GM10248 (cell line): ENCODE measurements at regions of chr16 and their contacts with region 1.

Region 1: GRCh38 chr16:84970447-84971127 is 40.7 kb downstream of the ZDHHC7 start:
- DNase-seq: peak; percentile 85
- CTCF ChIP-seq: peak; percentile 90

Region 2: GRCh38 chr16:84277237-84277823 is 693.3 kb before region 1 on chr16:
- CTCF ChIA-PET with region 1: interaction called, 11 read pairs
- POLR2A ChIA-PET with region 1: no interaction called
- DNase-seq: peak; percentile 72
- CTCF ChIP-seq: peak; percentile 90

Region 3: DNA sequence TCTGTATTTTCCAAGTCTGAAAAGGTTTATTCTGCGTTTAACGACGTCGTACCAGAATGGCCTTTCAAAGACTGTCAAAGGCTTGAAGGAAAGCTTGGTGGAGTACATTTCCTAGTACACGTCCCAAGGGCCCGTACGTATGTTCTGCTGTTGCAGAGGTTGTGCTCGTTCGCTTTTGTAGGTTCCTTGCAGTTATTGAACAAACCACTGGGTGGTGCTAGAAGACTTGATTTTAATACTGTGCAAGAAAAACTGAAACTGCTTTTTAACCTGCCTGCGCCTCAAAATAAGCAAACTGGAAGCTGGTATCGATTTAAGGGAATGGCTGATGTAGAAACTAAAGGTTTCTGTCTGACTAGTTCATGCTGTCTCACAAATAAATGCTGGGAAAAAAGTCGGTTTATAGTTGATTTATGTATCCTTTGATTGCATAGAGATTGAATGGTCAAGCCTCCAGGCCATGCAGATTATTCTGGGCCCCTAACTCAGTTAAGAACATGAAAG is 216.2 kb before region 1 on chr16:
- CTCF ChIA-PET with region 1: interaction called, 121 read pairs
- POLR2A ChIA-PET with region 1: no interaction called
- DNase-seq: peak; percentile 74
- CTCF ChIP-seq: peak; percentile 63

Region 4: DNA sequence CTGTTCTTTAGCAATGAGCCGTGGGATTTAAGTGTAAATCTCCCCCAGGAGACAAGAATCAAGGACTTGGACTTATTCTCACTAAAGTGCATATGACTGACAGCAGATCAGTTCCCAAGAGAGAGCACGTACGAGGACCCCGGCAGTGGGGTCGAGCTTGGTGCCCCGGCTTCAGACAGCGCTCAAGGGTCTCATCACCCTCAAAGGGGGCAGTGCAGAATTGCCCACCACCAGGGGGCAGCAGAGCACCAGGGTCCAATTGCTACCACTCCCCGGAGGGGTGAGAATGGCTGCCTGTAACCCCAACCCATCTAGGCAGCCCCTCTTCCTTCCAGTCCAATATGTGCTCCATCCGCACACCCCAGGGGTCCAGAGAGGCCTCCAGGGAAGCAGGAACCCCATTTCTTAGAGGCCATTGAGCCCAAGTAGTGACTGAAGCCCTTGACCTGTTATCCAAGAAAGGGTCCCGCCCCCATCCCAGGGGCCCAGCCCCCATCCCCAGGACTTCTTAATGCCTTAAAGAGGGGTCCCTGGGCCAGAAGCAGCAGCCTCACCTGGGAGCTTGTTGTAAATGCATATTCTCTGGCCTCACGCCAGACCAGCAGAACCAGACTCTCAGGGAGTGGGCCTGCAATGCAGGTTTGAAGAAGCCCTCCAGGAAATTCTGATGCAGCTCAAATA is 45.4 kb before region 1 on chr16:
- CTCF ChIA-PET with region 1: interaction called, 89 read pairs
- POLR2A ChIA-PET with region 1: no interaction called
- DNase-seq: peak; percentile 77
- CTCF ChIP-seq: peak; percentile 82

Region 5: DNA sequence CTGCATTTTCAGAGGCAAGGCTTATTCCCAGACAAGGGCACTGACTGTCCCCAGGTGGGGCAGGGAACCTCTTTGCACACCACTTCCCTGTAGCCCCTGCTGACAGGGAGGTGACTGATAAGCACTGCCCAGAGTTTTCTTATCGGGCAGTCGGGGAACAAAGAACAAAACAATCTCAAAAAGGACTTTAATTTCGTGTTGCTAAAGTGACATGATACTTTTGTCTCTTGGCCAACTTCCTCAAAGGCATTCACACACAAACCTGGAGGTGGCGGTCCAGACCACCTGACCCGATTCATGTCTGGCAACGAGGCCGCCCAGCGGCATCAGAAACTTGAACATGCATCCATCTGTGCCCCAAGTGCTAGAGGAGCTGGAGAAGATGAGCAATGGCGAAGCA is 11.8 kb after region 1 on chr16:
- CTCF ChIA-PET with region 1: interaction called, 14 read pairs
- POLR2A ChIA-PET with region 1: interaction called, 5 read pairs
- DNase-seq: no peak
- CTCF ChIP-seq: no peak

Region 6: DNA sequence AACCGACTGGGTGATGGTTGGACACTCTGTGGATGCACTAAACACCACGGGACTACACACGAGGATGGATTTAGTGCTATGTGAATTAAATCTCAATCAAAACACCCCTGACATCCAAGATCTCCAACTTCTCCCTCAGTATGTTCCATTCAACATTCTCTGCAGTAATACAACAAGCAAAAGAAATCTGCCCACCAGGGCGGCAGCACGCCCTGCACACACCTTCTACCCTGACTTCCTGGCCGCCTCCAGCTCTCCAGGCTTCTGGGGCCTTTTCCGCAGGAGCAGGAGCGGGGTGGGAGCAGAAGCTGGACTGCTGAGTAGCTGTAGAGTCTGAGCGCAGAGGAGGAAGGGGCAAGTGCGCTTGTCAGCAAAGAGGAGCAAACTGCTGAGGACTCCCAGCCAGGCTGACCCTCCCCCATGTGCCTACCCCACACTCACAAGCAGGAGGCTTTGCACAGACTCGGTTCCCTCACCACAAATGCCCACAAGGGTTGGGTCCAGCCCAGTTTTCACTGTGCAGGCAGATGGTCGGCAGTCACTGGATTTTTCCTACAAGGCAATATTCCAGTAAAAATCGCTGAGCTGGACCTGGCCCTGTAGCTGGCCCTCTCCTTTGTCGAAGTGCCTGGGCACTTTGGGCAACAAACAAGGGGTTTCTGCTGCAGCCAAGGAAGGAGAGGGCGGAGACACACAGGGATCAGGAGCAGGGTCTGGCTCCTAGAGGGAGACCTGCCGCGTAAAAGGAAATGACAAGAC is 17.9 kb after region 1 on chr16:
- CTCF ChIA-PET with region 1: interaction called, 16 read pairs
- POLR2A ChIA-PET with region 1: no interaction called
- DNase-seq: no peak
- CTCF ChIP-seq: no peak

Region 7: DNA sequence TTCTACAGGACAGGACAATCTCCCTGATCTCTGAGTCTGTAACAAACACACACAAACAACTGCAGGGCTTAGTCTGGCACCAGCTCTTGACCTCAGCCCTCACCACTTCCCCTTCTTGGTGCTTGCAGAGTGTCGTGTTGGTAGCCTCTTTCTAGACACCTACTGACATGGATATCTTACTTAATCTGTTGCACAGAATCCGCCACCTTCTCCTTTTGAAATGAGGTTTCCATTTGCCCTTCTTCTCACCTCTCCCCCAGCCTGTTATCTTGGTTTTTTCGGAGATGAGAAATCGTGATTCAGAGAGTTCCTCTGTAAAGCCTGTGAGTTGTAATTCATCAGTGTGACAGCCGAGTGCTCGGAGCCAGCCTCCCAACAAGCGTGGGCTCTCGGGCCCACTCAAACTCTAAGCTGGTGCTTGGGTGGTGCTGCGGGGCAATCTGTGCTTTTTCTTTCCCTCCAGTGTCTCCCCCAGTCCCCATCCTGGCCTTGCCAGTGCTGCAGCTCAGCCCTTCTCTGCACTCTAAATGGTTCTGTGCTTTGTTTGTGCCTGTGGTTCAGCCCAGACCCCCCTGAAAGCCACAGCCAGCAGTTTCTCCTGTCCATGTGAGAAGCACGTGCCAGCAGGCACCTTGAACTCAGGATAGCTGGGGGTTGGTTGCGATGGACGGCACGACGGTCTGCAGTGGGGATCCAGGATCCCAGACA is 85.1 kb after region 1 on chr16:
- CTCF ChIA-PET with region 1: no interaction called
- POLR2A ChIA-PET with region 1: no interaction called
- DNase-seq: peak; percentile 71
- CTCF ChIP-seq: peak; percentile 2

Region 8: DNA sequence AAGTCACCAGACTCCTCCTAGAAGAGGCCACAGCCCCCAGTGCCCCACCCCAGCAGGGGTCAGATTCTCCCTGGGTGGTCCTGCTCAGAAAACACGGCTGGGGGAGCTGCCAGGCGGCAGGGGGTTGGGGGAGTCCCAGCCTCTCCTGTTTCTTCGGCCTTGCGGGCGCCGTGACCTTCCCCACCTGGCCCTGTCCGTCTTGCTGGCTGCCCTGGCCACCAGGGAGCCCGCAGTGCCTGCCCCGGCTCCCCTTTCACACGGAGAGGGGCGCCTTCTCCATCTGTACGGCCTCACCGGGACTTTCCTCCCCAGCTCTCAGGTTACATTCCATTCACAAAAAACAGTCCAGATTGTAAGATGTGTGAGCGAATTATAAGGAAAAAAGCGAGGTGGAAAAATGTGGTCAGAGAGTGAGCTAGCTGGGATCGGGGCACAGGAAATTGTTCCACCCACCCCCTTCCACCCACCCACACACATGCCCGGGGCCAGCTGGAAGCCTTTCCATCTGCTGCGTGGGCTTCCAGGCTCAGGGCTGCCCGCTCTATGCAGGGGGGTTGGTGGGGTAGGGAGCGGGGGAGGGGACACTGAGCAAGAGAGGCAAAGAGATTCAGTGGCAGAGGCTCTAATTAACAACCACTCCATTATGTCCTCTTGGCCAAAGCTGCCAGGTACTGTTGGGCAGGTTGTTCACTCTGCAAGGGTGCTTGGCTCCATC is 156.3 kb after region 1 on chr16:
- CTCF ChIA-PET with region 1: no interaction called
- POLR2A ChIA-PET with region 1: no interaction called
- DNase-seq: no peak
- CTCF ChIP-seq: no peak